ENCODE measurements at regions of chr12 and their contacts with region 1.

Region 1: DNA sequence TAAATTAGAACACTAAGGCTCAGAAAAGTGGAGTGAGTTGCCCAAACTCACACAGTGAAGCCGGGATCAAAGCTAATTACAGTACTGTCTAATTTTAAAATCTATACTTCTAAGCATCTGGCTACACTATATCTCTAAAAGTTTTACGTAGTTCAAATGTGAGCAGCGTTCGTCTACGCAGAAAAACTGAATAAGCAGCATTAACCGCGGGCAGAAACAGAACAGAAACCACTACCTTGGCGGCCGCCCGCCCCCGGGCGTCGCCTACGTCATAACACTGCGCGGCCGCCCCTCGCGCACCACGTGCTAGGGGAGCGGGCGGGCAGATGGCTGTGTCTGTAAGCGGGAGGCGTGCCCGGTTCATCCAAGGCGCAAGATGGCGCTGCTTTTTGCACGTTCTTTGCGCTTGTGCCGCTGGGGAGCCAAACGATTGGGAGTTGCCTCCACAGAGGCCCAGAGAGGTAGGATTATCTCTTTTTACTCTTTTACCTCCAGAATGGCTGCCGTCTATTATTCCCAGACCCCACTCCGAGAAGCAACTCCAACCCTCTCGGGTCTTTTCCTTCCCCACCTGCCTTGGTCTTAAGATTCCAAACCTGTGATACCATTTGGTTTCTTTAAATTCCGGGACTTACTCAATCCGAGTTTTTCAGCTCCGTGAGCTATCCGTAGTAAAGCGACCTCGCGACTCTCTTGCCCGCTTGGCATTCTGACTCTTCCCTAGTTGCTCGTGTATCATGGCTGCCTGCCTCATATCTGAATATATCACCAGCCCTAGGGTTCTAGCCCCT is at the start of gene SPRYD4:
- DNase-seq: peak; percentile 95 to 97 (median 96)
- ATAC-seq: peak; percentile 91
- H3K4me3 ChIP-seq: peak within 1 kb of the TSS; percentile 66
- H3K27ac ChIP-seq: peak within 1 kb of the TSS; percentile 91
- H3K4me1 ChIP-seq: peaks cover 9 to 10% of the 10 kb centered on the region in 2 experiments; a peak in 3 of 5 replicates
- H3K27me3 ChIP-seq: no peaks in the 10 kb centered on the region
- CTCF ChIP-seq: peak; percentile 45 to 52 (median 50)
- EP300 ChIP-seq: no peak
- POLR2A ChIP-seq: peak; percentile 92
- RAD21 ChIP-seq: peak in 1 of 2 experiments; percentile 11; a peak in 2 of 4 replicates
- polyA plus RNA-seq, gene SPRYD4: 3.8 to 4.7 TPM

Region 2: GRCh38 chr12:56127888-56128669 is 340.3 kb before region 1 on chr12 and contains the start of gene ESYT1:
- CTCF ChIA-PET with region 1: no interaction called
- POLR2A ChIA-PET with region 1: no interaction called
- in situ Hi-C with region 1: loop called (anchors 10 kb)
- intact Hi-C with region 1: no loop called
- DNase-seq: peak; percentile 95 to 100 (median 97)
- ATAC-seq: peak; percentile 89
- H3K4me3 ChIP-seq: peak within 1 kb of the TSS; percentile 92
- H3K27ac ChIP-seq: peak within 1 kb of the TSS; percentile 93
- H3K4me1 ChIP-seq: peaks cover 31 to 46% of the 10 kb centered on the region in 2 experiments
- H3K27me3 ChIP-seq: no peaks in the 10 kb centered on the region
- CTCF ChIP-seq: peak in 2 of 3 experiments; percentile 3 to 14; a peak in 2 of 6 replicates
- EP300 ChIP-seq: no peak; the same call in none of the 2 replicates
- POLR2A ChIP-seq: peak; percentile 94
- RAD21 ChIP-seq: peak in 1 of 2 experiments; percentile 23; a peak in 2 of 4 replicates
- polyA plus RNA-seq, gene ESYT1: 156 to 194 TPM

Region 3: GRCh38 chr12:56315622-56316473 is 152.6 kb before region 1 on chr12 and contains the start of gene CNPY2:
- CTCF ChIA-PET with region 1: interaction called, 4 read pairs
- POLR2A ChIA-PET with region 1: interaction called, 4 read pairs
- in situ Hi-C with region 1: no loop called
- intact Hi-C with region 1: loop called (anchors 1 kb)
- DNase-seq: peak; percentile 94 to 98 (median 95)
- ATAC-seq: peak; percentile 96
- H3K4me3 ChIP-seq: peak within 1 kb of the TSS; percentile 72
- H3K27ac ChIP-seq: peak within 1 kb of the TSS; percentile 77
- H3K4me1 ChIP-seq: peaks cover 11% of the 10 kb centered on the region in 2 experiments; a peak in 4 of 5 replicates
- H3K27me3 ChIP-seq: no peaks in the 10 kb centered on the region
- CTCF ChIP-seq: peak; percentile 69 to 76 (median 75)
- EP300 ChIP-seq: no peak
- POLR2A ChIP-seq: peak; percentile 88
- RAD21 ChIP-seq: peak; percentile 46 to 83
- polyA plus RNA-seq, gene CNPY2: 33.8 to 45.0 TPM

Region 4: DNA sequence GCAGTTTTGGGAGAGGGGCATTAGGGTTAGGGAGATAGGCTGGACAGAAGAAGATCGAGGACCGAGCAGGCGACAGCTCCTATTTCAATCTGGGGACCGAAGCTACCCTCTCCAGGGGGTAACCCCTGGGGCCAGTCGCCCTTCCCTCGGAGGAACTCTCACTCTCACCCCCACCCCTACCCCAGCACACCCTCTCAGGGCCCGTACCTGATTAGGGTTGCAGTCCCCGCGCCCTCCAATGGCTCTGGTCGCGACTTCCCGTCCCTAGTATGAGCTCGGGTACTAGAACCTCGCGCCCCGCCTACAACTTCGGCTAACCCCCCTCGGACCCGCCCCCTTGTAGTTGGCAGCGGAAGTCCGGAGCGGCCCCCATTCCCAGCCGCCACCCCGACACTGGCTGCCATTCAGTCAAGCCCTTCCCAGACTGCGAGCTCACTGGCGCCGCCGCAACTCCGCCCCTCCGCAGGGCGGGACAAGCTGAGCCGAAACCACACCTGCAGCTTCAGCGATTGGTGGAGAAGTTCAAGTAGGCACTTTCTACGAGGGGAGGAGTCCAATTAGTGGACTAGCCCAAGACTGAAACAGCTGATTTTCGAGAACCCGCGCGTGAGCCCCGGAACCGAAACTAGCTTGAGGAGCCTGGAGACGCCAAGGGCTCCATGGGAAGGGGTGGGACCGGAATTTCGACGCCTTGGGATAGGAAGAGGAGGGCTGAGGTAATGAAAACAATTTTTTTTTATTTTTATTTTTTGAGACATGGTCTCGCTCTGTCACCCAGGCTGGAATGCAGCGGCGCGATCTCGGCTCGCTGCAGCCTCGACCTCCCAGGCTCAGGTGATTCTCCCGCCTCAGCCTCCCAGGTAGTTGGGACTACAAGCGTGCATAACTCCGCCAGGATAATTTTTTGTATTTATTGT is 108.3 kb before region 1 on chr12 and contains the start of gene STAT2:
- CTCF ChIA-PET with region 1: no interaction called
- POLR2A ChIA-PET with region 1: interaction called, 5 read pairs
- in situ Hi-C with region 1: no loop called
- intact Hi-C with region 1: loop called (anchors 5 kb)
- DNase-seq: peak; percentile 94 to 100 (median 96)
- ATAC-seq: peak; percentile 98
- H3K4me3 ChIP-seq: peak within 1 kb of the TSS; percentile 64
- H3K27ac ChIP-seq: peak within 1 kb of the TSS; percentile 76
- H3K4me1 ChIP-seq: peaks cover 13 to 15% of the 10 kb centered on the region in 2 experiments
- H3K27me3 ChIP-seq: no peaks in the 10 kb centered on the region
- CTCF ChIP-seq: peak in 1 of 3 experiments; percentile 19; a peak in 1 of 6 replicates
- EP300 ChIP-seq: peak; percentile 50
- POLR2A ChIP-seq: peak; percentile 82
- RAD21 ChIP-seq: peak in 1 of 2 experiments; percentile 19; a peak in 1 of 4 replicates
- polyA plus RNA-seq, gene STAT2: 15.5 to 16.9 TPM

Region 5: DNA sequence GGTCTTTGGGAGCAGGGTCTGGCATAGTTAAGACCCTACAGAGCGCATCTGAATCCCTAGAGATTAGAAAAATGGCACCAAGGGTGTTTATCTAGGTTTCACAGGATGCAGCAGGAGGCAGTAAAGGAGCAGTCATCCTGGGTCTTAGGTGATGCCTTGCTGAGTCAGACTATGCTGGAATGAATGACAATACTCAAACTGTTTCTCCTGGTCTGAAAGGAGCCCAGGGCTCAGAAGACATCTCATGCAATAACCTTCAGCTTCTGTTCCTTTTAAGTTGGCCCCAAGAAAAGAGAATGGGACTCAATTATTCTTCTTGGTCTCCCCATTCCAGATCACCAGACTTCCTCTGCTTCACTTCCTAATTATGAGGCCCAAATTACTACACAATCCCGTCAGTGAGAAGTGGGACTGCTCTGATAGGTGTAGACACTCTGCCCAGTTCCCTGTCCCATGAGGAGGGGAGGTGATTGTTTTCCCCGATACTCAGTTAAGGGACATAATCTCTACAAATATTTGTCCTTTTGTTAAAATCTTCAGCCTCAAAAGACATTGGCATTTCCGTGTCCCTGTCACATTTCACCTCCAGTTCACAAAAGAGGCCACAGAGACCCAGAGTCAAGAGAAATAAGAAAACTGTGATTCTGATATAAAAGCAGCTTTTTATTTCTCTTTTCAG is 91.0 kb before region 1 on chr12:
- CTCF ChIA-PET with region 1: interaction called, 25 read pairs
- POLR2A ChIA-PET with region 1: interaction called, 4 read pairs
- in situ Hi-C with region 1: no loop called
- intact Hi-C with region 1: loop called (anchors 1 kb)
- DNase-seq: peak; percentile 57 to 89 (median 74)
- ATAC-seq: peak; percentile 95
- H3K4me3 ChIP-seq: no peak overlapping the region
- H3K27ac ChIP-seq: peak overlapping the region; percentile 83
- H3K4me1 ChIP-seq: peaks cover 22 to 24% of the 10 kb centered on the region in 2 experiments; a peak in 4 of 5 replicates
- H3K27me3 ChIP-seq: no peaks in the 10 kb centered on the region
- CTCF ChIP-seq: peak; percentile 71 to 79 (median 74)
- EP300 ChIP-seq: peak; percentile 60; the same call in 1 of the 2 replicates
- POLR2A ChIP-seq: no peak; the same call in 1 of the 2 replicates
- RAD21 ChIP-seq: peak; percentile 83 to 93

Region 6: GRCh38 chr12:56448860-56449621 is 19.4 kb before region 1 on chr12 and contains the start of gene TIMELESS:
- CTCF ChIA-PET with region 1: no interaction called
- POLR2A ChIA-PET with region 1: interaction called, 10 read pairs
- in situ Hi-C with region 1: no loop called
- intact Hi-C with region 1: no loop called
- DNase-seq: peak; percentile 94 to 95 (median 95)
- ATAC-seq: peak; percentile 96
- H3K4me3 ChIP-seq: peak within 1 kb of the TSS; percentile 52
- H3K27ac ChIP-seq: peak within 1 kb of the TSS; percentile 91
- H3K4me1 ChIP-seq: peaks cover 11 to 19% of the 10 kb centered on the region in 2 experiments
- H3K27me3 ChIP-seq: no peaks in the 10 kb centered on the region
- CTCF ChIP-seq: 0 out of 6 replicates have a peak, but pooled peaks of 1 of the 3 experiments have one; percentile 15
- EP300 ChIP-seq: no peak; the same call in 1 of the 2 replicates
- POLR2A ChIP-seq: peak; percentile 95
- RAD21 ChIP-seq: no peak
- polyA plus RNA-seq, gene TIMELESS: 11.9 to 17.8 TPM

Region 7: DNA sequence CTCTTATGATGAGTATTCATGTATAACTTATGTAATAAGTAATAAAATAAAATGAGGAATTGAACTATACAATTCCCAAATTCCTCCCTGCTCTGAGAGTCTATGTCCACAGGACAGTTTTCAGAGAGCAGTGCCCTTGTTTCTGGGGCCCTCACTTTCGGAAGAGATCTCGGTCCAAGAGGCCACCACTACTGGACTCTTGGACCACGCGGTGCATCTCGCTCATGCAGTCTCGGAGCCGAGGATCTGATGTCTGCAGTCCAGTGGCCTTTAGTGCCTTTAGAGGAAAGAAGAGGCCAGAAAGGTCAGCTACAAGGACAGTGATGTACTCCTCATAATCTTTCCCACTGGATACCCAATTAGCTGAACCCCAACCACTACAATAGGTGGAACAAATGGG is 11.2 kb after region 1 on chr12:
- CTCF ChIA-PET with region 1: no interaction called
- POLR2A ChIA-PET with region 1: interaction called, 10 read pairs
- in situ Hi-C with region 1: no loop called
- intact Hi-C with region 1: no loop called
- DNase-seq: no peak
- ATAC-seq: no peak
- H3K4me3 ChIP-seq: no peak overlapping the region
- H3K27ac ChIP-seq: no peak overlapping the region
- H3K4me1 ChIP-seq: peaks cover 0 to 4% of the 10 kb centered on the region in 2 experiments; a peak in 2 of 5 replicates
- H3K27me3 ChIP-seq: no peaks in the 10 kb centered on the region
- CTCF ChIP-seq: no peak
- EP300 ChIP-seq: no peak
- POLR2A ChIP-seq: no peak
- RAD21 ChIP-seq: no peak

Measured in K562 (cell line).